Thyroid gland (tissue), 4 donors: ENCODE measurements at regions of chr5 and their contacts with region 1.

Region 1: GRCh38 chr5:66829826-66830225 is 233.6 kb downstream of the MAST4 start:
- DNase-seq: no peak
- H3K4me3 ChIP-seq: no peak overlapping the region
- H3K27ac ChIP-seq: no peak overlapping the region
- H3K4me1 ChIP-seq: peaks cover 7 to 21% of the 10 kb centered on the region in 2 donors
- H3K27me3 ChIP-seq: no peaks in the 10 kb centered on the region
- CTCF ChIP-seq: no peak
- POLR2A ChIP-seq: no peak

Region 2: DNA sequence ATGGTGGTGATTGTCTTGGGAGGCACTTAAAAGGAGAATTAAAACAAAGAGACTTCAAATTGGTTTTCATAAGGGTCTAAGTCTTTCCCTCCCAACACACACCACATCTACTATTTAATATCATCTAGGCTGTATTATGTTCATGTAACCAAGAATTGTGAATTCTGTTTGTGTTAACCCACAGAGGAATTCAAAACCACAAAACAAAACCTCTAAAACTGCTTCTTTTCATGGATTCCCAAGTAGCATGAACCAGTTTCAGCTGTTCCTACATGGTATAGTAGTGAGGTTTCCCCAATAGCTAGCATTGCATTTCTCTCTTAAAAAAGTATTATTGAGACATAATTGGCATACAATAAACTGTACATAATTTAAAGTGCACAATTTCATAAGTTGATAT is 83.0 kb after region 1 on chr5:
- intact Hi-C with region 1: loop called (anchors 10 kb)
- DNase-seq: no peak
- H3K4me3 ChIP-seq: no peak overlapping the region
- H3K27ac ChIP-seq: no peak overlapping the region
- H3K4me1 ChIP-seq: no peaks in the 10 kb centered on the region
- H3K27me3 ChIP-seq: no peaks in the 10 kb centered on the region
- CTCF ChIP-seq: no peak
- POLR2A ChIP-seq: no peak